ENCODE measurements at regions of chr17 and their contacts with region 1.

Region 1: GRCh38 chr17:5249615-5250014 is 15.0 kb upstream of the SCIMP start:
- DNase-seq: peak; percentile 78
- H3K4me3 ChIP-seq: no peak overlapping the region
- H3K27ac ChIP-seq: no peak overlapping the region
- H3K4me1 ChIP-seq: no peaks in the 10 kb centered on the region
- H3K27me3 ChIP-seq: no peaks in the 10 kb centered on the region

Region 2: GRCh38 chr17:6443692-6444569 is 1194.3 kb after region 1 on chr17 and contains the start of gene PIMREG:
- in situ Hi-C with region 1: loop called (anchors 25 kb)
- DNase-seq: peak; percentile 99
- H3K4me3 ChIP-seq: peak within 1 kb of the TSS; percentile 75
- H3K27ac ChIP-seq: peak within 1 kb of the TSS; percentile 77
- H3K4me1 ChIP-seq: peaks cover 12% of the 10 kb centered on the region
- H3K27me3 ChIP-seq: no peaks in the 10 kb centered on the region
- total RNA-seq, gene PIMREG: 20.7 and 28.7 TPM in 2 replicates